ENCODE measurements at regions of chr14 and their contacts with region 1.

Region 1: DNA sequence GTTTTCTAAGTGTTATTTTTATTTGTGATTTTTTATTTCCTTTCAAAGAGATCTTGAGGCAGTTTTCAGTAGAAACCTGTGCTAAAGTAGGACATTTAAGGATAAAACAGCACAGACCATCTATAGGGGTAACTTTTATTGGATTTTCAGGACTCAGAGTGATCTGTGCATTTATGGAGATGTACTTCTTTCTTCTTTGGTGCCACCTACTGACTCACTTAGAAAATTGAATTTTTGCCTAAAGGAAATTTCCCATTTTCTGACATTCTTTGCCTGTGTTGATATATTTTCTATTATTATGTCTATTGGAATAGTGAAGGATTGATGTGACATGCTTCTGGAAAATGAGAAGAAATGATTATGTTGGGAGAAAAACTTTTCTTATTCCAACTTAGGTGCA is 113.0 kb downstream of the UNC79 start:
- DNase-seq: no peak
- ATAC-seq: no peak
- H3K4me3 Mint-ChIP-seq: no peak overlapping the region
- H3K27ac Mint-ChIP-seq: no peak overlapping the region
- H3K4me1 Mint-ChIP-seq: no peaks in the 10 kb centered on the region
- H3K27me3 Mint-ChIP-seq: peaks cover 16% of the 10 kb centered on the region
- CTCF ChIP-seq: peak; percentile 48

Region 2: DNA sequence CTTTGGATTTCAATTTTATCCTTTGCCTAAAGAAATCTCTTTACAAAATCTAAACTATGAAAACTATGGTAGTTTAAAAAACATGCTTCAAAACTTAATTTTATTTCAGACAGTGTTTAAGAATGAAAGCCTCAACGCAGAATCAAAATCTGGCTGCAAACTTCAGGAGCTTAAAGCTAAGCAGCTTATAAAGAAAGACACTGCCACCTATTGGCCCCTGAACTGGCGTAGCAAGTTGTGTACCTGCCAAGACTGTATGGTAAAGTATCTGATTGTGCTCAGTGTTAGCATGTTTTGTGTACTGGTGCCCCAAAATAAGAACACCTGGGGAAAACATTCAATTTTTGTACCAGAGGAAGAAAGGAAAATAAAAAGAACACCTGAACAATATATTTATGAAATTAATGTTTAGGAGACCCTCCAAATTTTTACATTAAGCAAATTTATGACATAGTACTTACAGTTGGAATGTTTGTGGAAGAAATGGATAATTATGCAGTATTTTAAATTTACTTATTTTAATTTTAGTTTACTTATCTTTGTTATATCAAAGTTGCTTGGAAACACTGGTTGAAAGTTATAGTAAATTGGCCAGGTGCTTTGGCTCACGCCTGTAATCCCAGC is 324.6 kb before region 1 on chr14:
- CTCF ChIA-PET with region 1: no interaction called
- POLR2A ChIA-PET with region 1: no interaction called
- intact Hi-C with region 1: loop called (anchors 5 kb)
- DNase-seq: peak; percentile 67
- ATAC-seq: peak; percentile 74
- H3K4me3 Mint-ChIP-seq: no peak overlapping the region
- H3K27ac Mint-ChIP-seq: no peak overlapping the region
- H3K4me1 Mint-ChIP-seq: peaks cover 6% of the 10 kb centered on the region
- H3K27me3 Mint-ChIP-seq: no peaks in the 10 kb centered on the region
- CTCF ChIP-seq: peak; percentile 64

Region 3: GRCh38 chr14:93582516-93582915 is 38.8 kb after region 1 on chr14:
- CTCF ChIA-PET with region 1: no interaction called
- POLR2A ChIA-PET with region 1: no interaction called
- intact Hi-C with region 1: no loop called
- DNase-seq: no peak
- ATAC-seq: no peak
- H3K4me3 Mint-ChIP-seq: no peak overlapping the region
- H3K27ac Mint-ChIP-seq: no peak overlapping the region
- H3K4me1 Mint-ChIP-seq: no peaks in the 10 kb centered on the region
- H3K27me3 Mint-ChIP-seq: peaks cover 1% of the 10 kb centered on the region
- CTCF ChIP-seq: no peak

Measured in activated CD8-positive, alpha-beta T cell treated with anti-CD3 and anti-CD28 coated beads for 36 hours (primary cell).